WTC11 (cell line): ENCODE measurements at regions of chr17 and their contacts with region 1.

Region 1: DNA sequence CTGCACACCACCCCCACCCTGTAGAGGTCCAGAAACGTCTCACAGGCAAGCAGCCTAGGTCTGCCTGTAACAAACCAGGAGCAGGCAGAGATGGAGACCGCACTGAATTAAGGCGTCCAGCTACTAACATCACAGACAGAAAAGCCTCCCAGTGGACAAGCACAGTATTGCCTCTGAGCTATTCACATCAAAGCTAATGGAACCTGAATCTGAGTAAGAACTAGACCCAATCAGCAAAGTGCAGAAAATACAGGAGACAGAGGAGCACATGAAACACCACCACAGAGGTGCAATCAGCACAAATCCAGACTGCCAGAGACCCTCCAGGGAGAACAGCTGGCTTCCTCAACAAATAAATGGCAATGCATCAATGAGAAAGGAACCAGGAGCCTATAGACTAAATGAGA is 22.2 kb upstream of the PEMT start:
- DNase-seq: peak; percentile 75
- ATAC-seq: peak; percentile 92
- H3K4me3 Mint-ChIP-seq: no peak overlapping the region
- H3K27ac Mint-ChIP-seq: no peak overlapping the region; the same call in 1 of the 2 replicates
- H3K4me1 Mint-ChIP-seq: peaks cover 26% of the 10 kb centered on the region
- H3K27me3 Mint-ChIP-seq: no peaks in the 10 kb centered on the region
- CTCF ChIP-seq: peak; percentile 43; the same call in 1 of the 2 replicates

Region 2: GRCh38 chr17:17591355-17592298 is 22.1 kb before region 1 on chr17 and contains the start of gene PEMT:
- CTCF ChIA-PET with region 1: interaction called, 13 read pairs
- POLR2A ChIA-PET with region 1: interaction called, 4 read pairs
- DNase-seq: peak; percentile 95
- ATAC-seq: peak; percentile 98
- H3K4me3 Mint-ChIP-seq: peak within 1 kb of the TSS; percentile 95
- H3K27ac Mint-ChIP-seq: peak within 1 kb of the TSS; percentile 96
- H3K4me1 Mint-ChIP-seq: peaks cover 17% of the 10 kb centered on the region
- H3K27me3 Mint-ChIP-seq: no peaks in the 10 kb centered on the region
- CTCF ChIP-seq: no peak
- total RNA-seq, gene PEMT: 51.9 to 54.6 TPM (median 53.1 TPM) in 3 replicates

Region 3: GRCh38 chr17:17603178-17603894 is 10.4 kb before region 1 on chr17:
- CTCF ChIA-PET with region 1: interaction called, 10 read pairs
- POLR2A ChIA-PET with region 1: no interaction called
- DNase-seq: no peak
- ATAC-seq: no peak; the same call in none of the 2 replicates
- H3K4me3 Mint-ChIP-seq: no peak overlapping the region
- H3K27ac Mint-ChIP-seq: no peak overlapping the region
- H3K4me1 Mint-ChIP-seq: peaks cover 5% of the 10 kb centered on the region
- H3K27me3 Mint-ChIP-seq: peaks cover 2% of the 10 kb centered on the region; the same call in 1 of the 2 replicates
- CTCF ChIP-seq: no peak

Region 4: DNA sequence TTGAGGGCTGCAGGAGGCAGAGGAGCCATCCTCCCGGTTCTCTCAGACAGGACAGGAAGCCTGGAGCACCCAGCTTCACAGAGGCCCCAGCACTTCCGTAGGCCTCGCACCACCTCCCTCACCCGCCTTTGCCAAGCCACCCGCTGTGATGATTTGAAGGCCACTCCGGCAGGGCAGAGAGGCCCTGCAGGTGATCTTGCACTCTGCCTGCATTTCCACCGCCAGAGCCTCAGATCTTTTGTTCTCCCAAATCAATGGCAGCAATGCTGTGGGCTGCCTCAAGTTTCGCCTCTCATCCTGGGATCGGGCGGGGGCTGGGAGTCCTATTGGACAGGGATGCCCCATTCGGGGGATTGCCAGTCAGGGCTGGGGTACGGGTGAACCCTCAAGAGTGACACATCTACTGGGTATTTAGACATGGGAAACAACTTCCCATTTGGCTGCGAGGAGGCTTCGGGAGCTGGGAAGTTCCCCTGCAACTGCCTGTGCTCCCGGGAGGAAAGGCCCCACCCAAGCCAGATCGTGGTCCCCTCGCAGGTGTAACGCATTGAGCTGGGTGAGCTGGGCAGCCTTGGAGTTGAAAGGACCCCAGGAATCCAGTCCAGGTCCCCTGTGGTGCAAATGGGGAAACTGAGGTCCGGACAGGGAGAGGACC is 12.6 kb after region 1 on chr17:
- CTCF ChIA-PET with region 1: interaction called, 17 read pairs
- POLR2A ChIA-PET with region 1: no interaction called
- DNase-seq: peak; percentile 67
- ATAC-seq: peak; percentile 79
- H3K4me3 Mint-ChIP-seq: peak overlapping the region; percentile 55
- H3K27ac Mint-ChIP-seq: peak overlapping the region; percentile 94
- H3K4me1 Mint-ChIP-seq: peaks cover 35% of the 10 kb centered on the region
- H3K27me3 Mint-ChIP-seq: no peaks in the 10 kb centered on the region
- CTCF ChIP-seq: no peak

Region 5: DNA sequence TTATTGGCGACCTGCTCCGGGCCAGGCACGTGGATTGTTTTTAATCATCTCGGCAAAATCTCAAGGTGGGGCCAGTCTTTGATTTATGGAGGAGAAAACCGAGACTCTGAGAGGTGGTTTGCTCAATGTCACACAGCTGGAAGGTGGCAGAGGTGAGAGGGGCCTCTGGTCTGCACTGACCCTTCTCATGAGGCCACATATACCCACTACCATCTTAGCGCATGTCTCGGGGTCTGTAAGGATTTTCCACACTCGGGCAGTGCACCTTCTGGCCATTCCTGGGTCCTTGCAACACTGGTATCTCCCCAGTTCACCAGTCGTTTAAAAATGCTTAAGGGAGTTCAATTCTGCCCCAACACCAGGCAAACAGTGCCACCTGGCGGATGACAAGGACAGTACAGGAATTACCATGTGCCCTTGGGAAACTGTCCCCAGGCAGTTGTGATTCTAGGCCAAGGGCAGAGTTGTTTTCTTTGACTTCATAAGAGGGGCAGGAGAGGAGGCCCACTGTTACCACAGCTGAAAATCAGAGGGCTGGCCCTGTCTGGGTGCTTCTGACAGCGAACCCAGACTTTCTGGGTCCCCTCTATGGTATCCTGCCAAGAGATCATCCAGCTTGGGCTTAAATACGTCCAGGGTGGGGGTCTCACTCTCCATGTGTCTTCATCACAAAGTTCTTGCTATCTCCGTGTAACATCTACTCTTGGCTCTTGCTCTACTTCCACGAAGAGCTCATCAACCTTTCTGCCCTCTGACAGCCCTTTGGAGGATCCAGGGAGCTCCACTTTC is 28.1 kb after region 1 on chr17:
- CTCF ChIA-PET with region 1: interaction called, 10 read pairs
- POLR2A ChIA-PET with region 1: no interaction called
- DNase-seq: peak; percentile 85
- ATAC-seq: peak; percentile 96
- H3K4me3 Mint-ChIP-seq: no peak overlapping the region
- H3K27ac Mint-ChIP-seq: no peak overlapping the region
- H3K4me1 Mint-ChIP-seq: peaks cover 7% of the 10 kb centered on the region
- H3K27me3 Mint-ChIP-seq: no peaks in the 10 kb centered on the region; the same call in 1 of the 2 replicates
- CTCF ChIP-seq: peak; percentile 91